Activated CD4-positive, alpha-beta T cell treated with anti-CD3 and anti-CD28 coated beads, Interleukin-2, amount 10 ng/mL, durations not matched to agents 24 days and 14 days (primary cell): ENCODE measurements at regions of chr6 and their contacts with region 1.

Region 1: GRCh38 chr6:142802124-142802523 is 142.9 kb downstream of the HIVEP2 start:
- DNase-seq: no peak
- H3K4me3 Mint-ChIP-seq: peak overlapping the region; percentile 52
- H3K27ac Mint-ChIP-seq: peak overlapping the region; percentile 82
- H3K4me1 Mint-ChIP-seq: peaks cover 54% of the 10 kb centered on the region
- H3K27me3 Mint-ChIP-seq: no peaks in the 10 kb centered on the region

Region 2: GRCh38 chr6:141610736-141611135 is 1191.4 kb before region 1 on chr6:
- intact Hi-C with region 1: no loop called
- DNase-seq: no peak
- H3K4me3 Mint-ChIP-seq: no peak overlapping the region
- H3K27ac Mint-ChIP-seq: no peak overlapping the region
- H3K4me1 Mint-ChIP-seq: no peaks in the 10 kb centered on the region
- H3K27me3 Mint-ChIP-seq: no peaks in the 10 kb centered on the region

Region 3: GRCh38 chr6:142773859-142774648 is 28.1 kb before region 1 on chr6:
- intact Hi-C with region 1: loop called (anchors 2 kb)
- DNase-seq: peak; percentile 68
- H3K4me3 Mint-ChIP-seq: peak overlapping the region; percentile 22
- H3K27ac Mint-ChIP-seq: peak overlapping the region; percentile 79
- H3K4me1 Mint-ChIP-seq: peaks cover 27% of the 10 kb centered on the region
- H3K27me3 Mint-ChIP-seq: no peaks in the 10 kb centered on the region

Region 4: GRCh38 chr6:142850679-142851423 is 48.7 kb after region 1 on chr6:
- intact Hi-C with region 1: loop called (anchors 1 kb)
- DNase-seq: peak; percentile 74
- H3K4me3 Mint-ChIP-seq: peak overlapping the region; percentile 70
- H3K27ac Mint-ChIP-seq: peak overlapping the region; percentile 87
- H3K4me1 Mint-ChIP-seq: peaks cover 83% of the 10 kb centered on the region
- H3K27me3 Mint-ChIP-seq: no peaks in the 10 kb centered on the region

Region 5: DNA sequence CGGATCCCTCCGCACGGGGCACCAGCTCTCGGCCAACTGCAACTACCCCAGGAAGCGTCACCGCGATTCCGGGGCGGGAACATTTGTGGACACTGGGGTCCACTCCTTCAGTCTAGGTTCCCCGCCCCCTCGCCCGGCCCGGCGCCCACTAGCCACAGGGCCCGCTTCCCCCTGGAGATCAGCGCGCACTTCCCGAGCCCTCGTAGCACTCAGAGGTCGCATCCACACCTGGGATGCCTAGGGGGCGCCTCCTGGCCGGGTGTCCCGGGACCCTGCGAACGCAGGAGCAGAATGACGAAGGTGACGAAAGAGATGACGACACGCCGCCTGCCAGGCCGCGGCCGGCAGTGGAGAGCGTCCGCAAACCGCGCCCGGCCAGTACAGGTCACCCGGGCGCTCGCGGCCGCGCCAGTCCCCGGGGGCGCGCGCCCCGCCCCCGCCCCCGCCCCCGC is 258.3 kb after region 1 on chr6:
- intact Hi-C with region 1: no loop called
- DNase-seq: peak; percentile 94
- H3K4me3 Mint-ChIP-seq: peak overlapping the region; percentile 91
- H3K27ac Mint-ChIP-seq: peak overlapping the region; percentile 92
- H3K4me1 Mint-ChIP-seq: peaks cover 23% of the 10 kb centered on the region
- H3K27me3 Mint-ChIP-seq: no peaks in the 10 kb centered on the region